ENCODE measurements at regions of chr1 and their contacts with region 1.

Region 1: DNA sequence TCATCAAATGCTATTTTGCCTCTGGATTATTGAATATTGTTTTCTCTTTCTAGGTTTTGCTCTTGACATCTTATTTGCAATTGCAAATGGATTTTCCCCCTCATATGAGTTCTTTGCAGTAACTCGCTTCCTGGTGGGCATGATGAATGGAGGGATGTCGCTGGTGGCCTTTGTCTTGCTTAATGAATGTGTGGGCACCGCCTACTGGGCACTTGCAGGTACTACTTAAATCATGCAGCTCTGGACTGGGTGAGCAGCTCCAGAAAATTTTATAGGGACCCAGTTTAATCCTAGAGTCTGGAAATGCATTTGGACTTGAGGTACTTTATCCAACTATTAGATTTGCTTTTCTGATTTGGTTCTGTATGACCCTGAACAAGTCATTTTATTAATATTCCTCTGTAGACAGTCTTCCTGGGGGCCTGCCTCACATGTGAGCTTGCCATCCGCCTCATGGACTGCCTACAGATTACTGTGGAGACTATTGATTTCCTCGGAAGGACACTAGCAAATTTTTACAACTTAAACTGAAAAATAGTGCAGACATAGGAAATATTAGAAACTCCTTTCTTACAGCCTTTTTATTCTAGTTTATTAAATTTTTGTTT is 44.5 kb downstream of the SLC22A15 start:
- DNase-seq: peak; percentile 67
- ATAC-seq: peak; percentile 81
- H3K4me3 Mint-ChIP-seq: no peak overlapping the region
- H3K27ac Mint-ChIP-seq: no peak overlapping the region
- H3K4me1 Mint-ChIP-seq: no peaks in the 10 kb centered on the region
- H3K27me3 Mint-ChIP-seq: peaks cover 5% of the 10 kb centered on the region

Region 2: DNA sequence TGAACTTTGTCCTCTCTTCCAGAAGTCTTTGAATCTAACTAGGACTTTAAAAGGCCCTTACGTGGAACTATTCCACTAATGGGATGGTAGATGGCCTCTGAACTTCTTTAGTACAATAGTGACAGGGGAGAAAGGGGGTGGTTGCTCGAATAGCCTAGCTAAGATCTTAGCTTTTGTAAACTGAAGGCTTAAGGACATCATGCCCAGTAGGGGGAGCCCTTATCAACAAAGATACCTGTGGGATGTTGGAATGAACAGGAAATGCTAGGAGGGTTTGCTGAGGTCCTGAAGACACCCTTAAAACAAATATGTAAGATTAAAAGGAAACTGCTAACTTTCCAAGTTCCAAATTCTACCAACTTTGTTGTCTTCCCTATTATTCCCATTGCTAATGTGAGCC is 213.0 kb before region 1 on chr1:
- CTCF ChIA-PET with region 1: interaction called, 22 read pairs
- POLR2A ChIA-PET with region 1: no interaction called
- DNase-seq: peak; percentile 70
- ATAC-seq: peak; percentile 49
- H3K4me3 Mint-ChIP-seq: no peak overlapping the region
- H3K27ac Mint-ChIP-seq: no peak overlapping the region
- H3K4me1 Mint-ChIP-seq: no peaks in the 10 kb centered on the region
- H3K27me3 Mint-ChIP-seq: peaks cover 13% of the 10 kb centered on the region

Region 3: DNA sequence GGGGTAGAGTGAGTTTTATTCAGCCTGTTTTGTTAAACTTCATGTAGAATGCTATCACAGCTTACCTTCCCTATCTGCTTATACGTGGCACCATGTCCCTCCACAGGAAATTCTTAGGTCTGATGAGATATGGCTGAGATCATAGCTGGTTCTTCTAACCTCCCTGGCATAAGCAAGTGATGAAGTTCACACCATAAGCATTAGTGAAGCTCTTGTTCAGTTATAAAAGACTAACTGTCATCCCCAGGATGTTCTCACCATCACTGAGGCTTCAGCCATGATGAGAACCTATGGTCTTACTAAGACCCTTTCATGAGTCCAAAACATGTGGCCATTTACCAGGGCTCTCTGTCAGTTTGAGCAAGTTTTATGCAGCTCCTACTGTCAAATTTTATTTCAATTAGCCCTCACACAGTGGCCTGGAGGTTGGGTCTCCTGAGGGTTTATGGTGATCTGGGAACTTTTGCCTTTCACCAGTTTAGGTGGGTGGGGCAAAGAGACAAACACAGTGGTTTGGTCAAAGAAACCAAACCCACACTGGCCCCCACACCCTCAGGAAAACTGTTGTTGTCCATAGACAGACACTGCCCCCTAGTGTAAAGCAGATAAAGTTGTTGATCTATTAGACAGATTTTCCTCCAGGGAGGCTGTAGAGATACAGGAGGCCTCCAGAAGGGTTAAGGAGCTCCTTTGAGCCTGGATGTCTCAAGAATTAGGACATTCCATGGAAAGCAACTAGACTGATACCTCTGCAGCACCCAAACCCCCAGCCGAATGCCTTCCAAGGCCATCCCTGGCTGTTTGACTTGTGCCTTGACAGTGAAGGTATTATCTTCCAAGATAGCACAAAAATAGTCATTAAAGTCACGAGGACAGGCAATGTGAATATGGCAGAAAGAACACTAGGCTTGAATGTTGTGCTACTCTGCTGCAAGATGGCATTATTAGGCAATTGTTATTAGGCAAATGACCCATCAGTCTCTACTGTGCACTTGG is 39.5 kb before region 1 on chr1:
- CTCF ChIA-PET with region 1: interaction called, 22 read pairs
- POLR2A ChIA-PET with region 1: no interaction called
- DNase-seq: peak; percentile 36
- ATAC-seq: peak; percentile 43
- H3K4me3 Mint-ChIP-seq: no peak overlapping the region
- H3K27ac Mint-ChIP-seq: no peak overlapping the region
- H3K4me1 Mint-ChIP-seq: no peaks in the 10 kb centered on the region
- H3K27me3 Mint-ChIP-seq: peaks cover 35% of the 10 kb centered on the region

Region 4: GRCh38 chr1:116008651-116009390 is 12.0 kb before region 1 on chr1:
- CTCF ChIA-PET with region 1: interaction called, 20 read pairs
- POLR2A ChIA-PET with region 1: no interaction called
- DNase-seq: no peak
- ATAC-seq: no peak
- H3K4me3 Mint-ChIP-seq: no peak overlapping the region
- H3K27ac Mint-ChIP-seq: no peak overlapping the region
- H3K4me1 Mint-ChIP-seq: peaks cover 12% of the 10 kb centered on the region
- H3K27me3 Mint-ChIP-seq: no peaks in the 10 kb centered on the region

Region 5: GRCh38 chr1:116033322-116033721 is 12.6 kb after region 1 on chr1:
- CTCF ChIA-PET with region 1: interaction called, 11 read pairs
- POLR2A ChIA-PET with region 1: interaction called, 3 read pairs
- DNase-seq: no peak
- ATAC-seq: no peak
- H3K4me3 Mint-ChIP-seq: no peak overlapping the region
- H3K27ac Mint-ChIP-seq: no peak overlapping the region
- H3K4me1 Mint-ChIP-seq: no peaks in the 10 kb centered on the region
- H3K27me3 Mint-ChIP-seq: peaks cover 3% of the 10 kb centered on the region